Calu3 (cell line): ENCODE measurements at regions of chr16 and their contacts with region 1.

Region 1: GRCh38 chr16:19167710-19168370 is at the start of gene SYT17:
- DNase-seq: peak; percentile 93
- H3K4me3 Mint-ChIP-seq: peak within 1 kb of the TSS; percentile 70
- H3K27ac Mint-ChIP-seq: no peak within 1 kb of the TSS
- H3K4me1 Mint-ChIP-seq: peaks cover 8% of the 10 kb centered on the region
- H3K27me3 Mint-ChIP-seq: peaks cover 18% of the 10 kb centered on the region
- CTCF ChIP-seq: peak; percentile 86
- total RNA-seq, gene SYT17: 10.6 and 16.6 TPM in 2 replicates

Region 2: GRCh38 chr16:18983565-18984424 is 184.0 kb before region 1 on chr16 and contains the start of gene TMC7:
- CTCF ChIA-PET with region 1: no interaction called
- intact Hi-C with region 1: no loop called
- DNase-seq: peak; percentile 99
- H3K4me3 Mint-ChIP-seq: peak within 1 kb of the TSS; percentile 75
- H3K27ac Mint-ChIP-seq: peak within 1 kb of the TSS; percentile 70
- H3K4me1 Mint-ChIP-seq: peaks cover 14% of the 10 kb centered on the region
- H3K27me3 Mint-ChIP-seq: no peaks in the 10 kb centered on the region
- CTCF ChIP-seq: peak; percentile 92
- total RNA-seq, gene TMC7: 10.1 and 10.8 TPM in 2 replicates

Region 3: DNA sequence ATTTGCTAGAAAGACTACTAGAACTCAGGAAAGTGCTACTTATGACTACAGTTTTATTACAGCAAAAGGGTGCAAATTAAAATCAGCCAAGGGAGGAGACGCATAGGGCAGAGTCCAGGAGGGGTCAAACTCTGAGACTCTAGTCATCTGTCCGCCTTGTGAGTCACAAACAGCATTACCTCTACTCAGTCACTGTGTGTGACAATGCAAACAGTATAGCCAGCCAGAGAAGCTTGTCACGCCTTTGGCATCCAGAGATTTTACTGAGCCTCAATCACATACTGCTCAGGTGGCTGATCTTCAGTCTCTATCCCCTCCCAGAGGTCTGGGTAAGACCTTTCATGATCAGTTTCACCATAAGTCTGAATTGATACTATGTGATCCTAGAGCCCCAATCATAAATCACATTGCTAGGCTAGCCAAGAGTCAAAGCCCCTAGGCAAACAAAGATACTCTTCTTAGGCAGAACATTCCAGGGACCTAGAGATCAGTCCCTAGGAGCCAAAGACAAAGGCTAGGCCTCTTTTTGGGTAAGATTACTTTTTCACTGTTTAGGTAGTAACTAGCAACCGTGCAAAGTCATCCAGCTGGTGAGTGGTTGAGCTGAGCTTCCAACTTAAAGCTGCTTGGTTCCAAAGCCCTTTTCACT is 68.8 kb after region 1 on chr16:
- CTCF ChIA-PET with region 1: no interaction called
- intact Hi-C with region 1: no loop called
- DNase-seq: peak; percentile 45
- H3K4me3 Mint-ChIP-seq: no peak overlapping the region
- H3K27ac Mint-ChIP-seq: peak overlapping the region; percentile 50
- H3K4me1 Mint-ChIP-seq: peaks cover 11% of the 10 kb centered on the region
- H3K27me3 Mint-ChIP-seq: no peaks in the 10 kb centered on the region
- CTCF ChIP-seq: no peak

Region 4: GRCh38 chr16:19375561-19376158 is 207.8 kb after region 1 on chr16:
- CTCF ChIA-PET with region 1: no interaction called
- intact Hi-C with region 1: loop called (anchors 1 kb)
- DNase-seq: peak; percentile 60
- H3K4me3 Mint-ChIP-seq: no peak overlapping the region
- H3K27ac Mint-ChIP-seq: no peak overlapping the region
- H3K4me1 Mint-ChIP-seq: no peaks in the 10 kb centered on the region
- H3K27me3 Mint-ChIP-seq: no peaks in the 10 kb centered on the region
- CTCF ChIP-seq: peak; percentile 89

Region 5: DNA sequence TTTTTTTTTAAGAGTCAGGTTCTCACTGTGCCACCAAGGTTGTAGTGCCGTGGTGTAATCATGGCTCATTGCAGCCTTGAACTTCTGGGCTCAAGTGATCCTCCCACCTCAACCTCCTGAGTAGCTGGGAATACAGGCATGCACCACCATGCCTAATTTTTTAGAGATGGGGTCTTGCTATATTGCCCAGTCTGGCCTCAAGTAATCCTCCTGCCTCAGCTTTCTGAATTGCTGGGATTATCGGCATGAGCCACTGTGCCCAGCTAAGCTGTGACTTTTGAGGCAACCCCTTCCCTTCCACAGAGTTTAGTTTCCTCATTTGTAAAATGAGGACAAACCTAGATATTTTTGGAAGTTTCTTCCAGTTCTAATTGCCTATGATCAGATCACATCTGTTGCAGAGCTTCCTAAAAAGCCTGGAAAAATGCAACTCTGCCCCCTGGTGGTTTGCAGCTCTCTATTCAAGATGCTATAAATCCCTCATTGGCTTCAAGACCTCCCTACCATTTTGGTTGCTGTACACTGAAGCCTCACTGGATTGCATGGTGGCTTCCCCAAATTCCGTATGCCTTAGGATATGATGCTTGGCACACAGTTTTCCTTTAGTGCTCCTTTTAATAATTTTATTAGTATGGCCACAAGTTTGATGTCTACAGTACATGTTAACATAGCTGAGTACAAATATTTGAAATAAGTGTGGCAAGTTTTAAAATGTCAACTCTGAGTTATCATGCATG is 334.7 kb after region 1 on chr16:
- CTCF ChIA-PET with region 1: no interaction called
- intact Hi-C with region 1: loop called (anchors 1 kb)
- DNase-seq: peak; percentile 88
- H3K4me3 Mint-ChIP-seq: no peak overlapping the region
- H3K27ac Mint-ChIP-seq: no peak overlapping the region
- H3K4me1 Mint-ChIP-seq: peaks cover 15% of the 10 kb centered on the region
- H3K27me3 Mint-ChIP-seq: no peaks in the 10 kb centered on the region
- CTCF ChIP-seq: peak; percentile 79